Colonic mucosa (tissue), 4 donors: ENCODE measurements at regions of chr2 and their contacts with region 1.

Region 1: GRCh38 chr2:148989882-148990493 is 48.5 kb upstream of the LYPD6B start:
- DNase-seq: peak; percentile 67
- H3K4me3 ChIP-seq: no peak overlapping the region
- H3K27ac ChIP-seq: no peak overlapping the region
- H3K4me1 ChIP-seq: no peaks in the 10 kb centered on the region
- H3K27me3 ChIP-seq: no peaks in the 10 kb centered on the region
- CTCF ChIP-seq: peak; percentile 59

Region 2: GRCh38 chr2:147405651-147406050 is 1584.3 kb before region 1 on chr2:
- intact Hi-C with region 1: no loop called
- DNase-seq: no peak
- H3K4me3 ChIP-seq: no peak overlapping the region
- H3K27ac ChIP-seq: no peak overlapping the region
- H3K4me1 ChIP-seq: no peaks in the 10 kb centered on the region
- H3K27me3 ChIP-seq: no peaks in the 10 kb centered on the region
- CTCF ChIP-seq: no peak

Region 3: GRCh38 chr2:148519013-148519412 is 471.0 kb before region 1 on chr2:
- intact Hi-C with region 1: loop called (anchors 10 kb)
- DNase-seq: no peak
- H3K4me3 ChIP-seq: no peak overlapping the region
- H3K27ac ChIP-seq: no peak overlapping the region
- H3K4me1 ChIP-seq: no peaks in the 10 kb centered on the region
- H3K27me3 ChIP-seq: no peaks in the 10 kb centered on the region
- CTCF ChIP-seq: no peak

Region 4: GRCh38 chr2:148644883-148645538 is 345.0 kb before region 1 on chr2:
- intact Hi-C with region 1: loop called (anchors 5 kb)
- DNase-seq: peak; percentile 94
- H3K4me3 ChIP-seq: peak overlapping the region; percentile 95
- H3K27ac ChIP-seq: peak overlapping the region; percentile 95
- H3K4me1 ChIP-seq: no peaks in the 10 kb centered on the region
- H3K27me3 ChIP-seq: no peaks in the 10 kb centered on the region
- CTCF ChIP-seq: no peak

Region 5: DNA sequence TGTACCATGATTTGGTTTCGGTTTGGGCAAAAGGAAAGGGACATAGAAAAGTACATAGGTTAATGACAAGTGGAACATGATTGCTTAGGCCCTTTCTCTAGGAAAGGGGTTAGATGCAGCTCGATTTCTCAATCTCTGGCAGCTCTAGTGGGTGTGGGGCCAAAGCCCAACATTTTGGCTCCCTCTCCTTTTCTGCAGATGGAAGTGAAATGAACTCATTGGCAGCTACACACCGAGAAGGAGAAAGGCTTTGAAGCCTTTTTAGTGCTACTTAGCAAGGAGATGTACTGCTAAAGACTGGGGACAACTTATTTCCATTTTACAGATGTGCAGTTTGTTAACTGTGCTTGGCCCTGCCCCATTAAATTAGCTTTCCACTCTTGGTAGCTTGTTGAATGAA is 142.4 kb after region 1 on chr2:
- intact Hi-C with region 1: no loop called
- DNase-seq: no peak
- H3K4me3 ChIP-seq: no peak overlapping the region
- H3K27ac ChIP-seq: no peak overlapping the region
- H3K4me1 ChIP-seq: no peaks in the 10 kb centered on the region
- H3K27me3 ChIP-seq: no peaks in the 10 kb centered on the region
- CTCF ChIP-seq: no peak